Keratinocyte (primary cell): ENCODE measurements at regions of chr17 and their contacts with region 1.

Region 1: GRCh38 chr17:4939796-4940624 is at the starts of genes RNF167 and SLC25A11:
- DNase-seq: peak; percentile 99
- H3K4me3 ChIP-seq: peak within 1 kb of the TSS; percentile 91 to 93 (median 91)
- H3K27ac ChIP-seq: peak within 1 kb of the TSS; percentile 98
- H3K4me1 ChIP-seq: peaks cover 32% of the 10 kb centered on the region
- H3K27me3 ChIP-seq: no peaks in the 10 kb centered on the region
- CTCF ChIP-seq: no peak
- polyA plus RNA-seq, gene RNF167: 101 to 129 TPM (median 118 TPM) in 3 replicates
- polyA plus RNA-seq, gene SLC25A11: 28.3 to 43.6 TPM (median 33.8 TPM) in 3 replicates

Region 2: DNA sequence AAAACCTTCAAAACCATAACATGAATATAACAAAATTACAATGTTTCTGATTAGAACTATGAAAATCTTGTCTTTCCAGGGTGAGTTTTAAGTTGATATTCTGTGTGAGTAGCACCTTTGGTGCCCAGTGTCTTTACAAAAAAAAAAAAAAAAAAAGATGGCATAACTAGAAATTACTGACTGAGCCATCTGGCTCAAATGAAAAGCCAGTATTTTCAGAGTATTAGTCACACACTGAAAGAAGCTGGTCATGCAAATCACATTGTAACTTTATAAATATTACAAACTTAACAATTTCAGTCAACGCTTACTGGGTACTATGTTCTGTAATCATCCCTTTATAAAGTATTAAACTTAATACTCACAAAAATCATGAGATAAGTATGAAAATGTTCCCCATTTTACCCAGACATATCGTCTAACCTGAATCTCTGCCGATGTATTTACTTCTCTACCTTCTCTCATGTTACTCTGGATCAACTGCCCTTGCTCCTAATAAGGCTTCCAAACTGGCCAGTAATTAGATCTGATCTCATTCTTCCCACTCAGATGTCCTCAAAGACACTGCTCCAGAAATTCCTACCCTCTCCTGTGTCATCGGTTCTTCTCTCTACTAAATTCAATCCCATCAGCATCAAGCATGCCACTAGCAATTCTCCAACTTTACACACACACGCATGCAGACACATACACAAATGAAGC is 598.9 kb before region 1 on chr17:
- dilution Hi-C with region 1: no loop called
- DNase-seq: no peak
- H3K4me3 ChIP-seq: no peak overlapping the region
- H3K27ac ChIP-seq: peak overlapping the region; percentile 8
- H3K4me1 ChIP-seq: peaks cover 23% of the 10 kb centered on the region
- H3K27me3 ChIP-seq: no peaks in the 10 kb centered on the region
- CTCF ChIP-seq: no peak

Region 3: DNA sequence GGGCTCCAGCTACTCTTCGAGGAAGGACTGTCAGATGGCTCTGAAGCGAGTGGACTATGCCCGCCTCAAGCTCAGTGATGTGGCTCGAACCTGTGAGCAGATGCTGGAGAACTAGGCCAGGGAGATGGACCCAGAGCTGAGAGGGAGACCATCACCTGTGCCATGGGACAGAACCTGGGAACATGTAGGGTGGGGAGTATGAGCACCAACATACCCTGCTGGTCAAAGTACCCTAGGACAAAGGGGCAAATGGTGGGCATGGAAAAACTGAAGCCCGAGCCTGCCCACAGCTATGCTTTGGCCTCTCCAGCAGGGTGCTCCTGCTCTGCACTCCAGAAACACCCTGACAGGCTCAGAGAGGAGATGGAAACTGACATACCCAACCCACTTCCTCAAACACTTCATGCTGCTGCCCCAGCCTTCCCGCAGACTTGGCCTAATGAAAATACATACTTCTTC is 206.9 kb before region 1 on chr17:
- dilution Hi-C with region 1: no loop called
- DNase-seq: no peak
- H3K4me3 ChIP-seq: no peak overlapping the region
- H3K27ac ChIP-seq: no peak overlapping the region
- H3K4me1 ChIP-seq: peaks cover 7% of the 10 kb centered on the region
- H3K27me3 ChIP-seq: no peaks in the 10 kb centered on the region
- CTCF ChIP-seq: peak; percentile 9 to 28 (median 9)

Region 4: GRCh38 chr17:5000237-5000639 is 60.2 kb after region 1 on chr17:
- dilution Hi-C with region 1: loop called (anchors 10 kb)
- DNase-seq: no peak
- H3K4me3 ChIP-seq: no peak overlapping the region
- H3K27ac ChIP-seq: no peak overlapping the region
- H3K4me1 ChIP-seq: peaks cover 16% of the 10 kb centered on the region
- H3K27me3 ChIP-seq: no peaks in the 10 kb centered on the region
- CTCF ChIP-seq: no peak

Region 5: GRCh38 chr17:5237541-5238016 is 297.6 kb after region 1 on chr17:
- dilution Hi-C with region 1: no loop called
- DNase-seq: no peak
- H3K4me3 ChIP-seq: no peak overlapping the region
- H3K27ac ChIP-seq: no peak overlapping the region
- H3K4me1 ChIP-seq: peaks cover 9% of the 10 kb centered on the region
- H3K27me3 ChIP-seq: no peaks in the 10 kb centered on the region
- CTCF ChIP-seq: peak; percentile 66 to 72 (median 67)